ENCODE measurements at regions of chr4 and their contacts with region 1.

Region 1: GRCh38 chr4:74932816-74933561 is at the start of gene PARM1:
- ATAC-seq: peak; percentile 89 to 96 (median 92)
- H3K4me3 ChIP-seq: peak within 1 kb of the TSS; percentile 45 to 59 (median 52)
- H3K27ac ChIP-seq: no peak within 1 kb of the TSS
- H3K4me1 ChIP-seq: peaks cover 2 to 6% of the 10 kb centered on the region in 2 donors
- total RNA-seq, gene PARM1: 0.21 to 29.5 (median 2.2) TPM

Region 2: DNA sequence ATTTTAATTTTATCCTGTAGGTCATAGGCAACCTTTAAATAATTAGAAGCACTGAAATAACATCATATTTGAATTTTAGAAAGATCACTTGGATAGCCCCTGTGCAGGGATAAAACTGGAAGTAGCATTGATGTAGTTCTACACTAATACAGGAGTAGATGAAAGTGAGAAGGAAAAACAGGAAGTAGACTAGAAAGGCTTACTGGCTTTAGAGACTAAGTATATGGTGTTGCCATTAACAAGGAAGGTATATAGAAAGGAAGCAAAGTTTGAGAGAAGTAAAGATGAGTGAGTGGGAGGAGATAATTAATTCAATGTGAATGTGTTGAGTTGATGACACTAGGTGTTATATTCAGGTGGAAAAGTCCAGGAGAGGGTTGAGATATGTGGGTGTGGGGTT is 697.9 kb before region 1 on chr4:
- in situ Hi-C with region 1: no loop called
- ATAC-seq: no peak
- H3K4me3 ChIP-seq: no peak overlapping the region
- H3K27ac ChIP-seq: no peak overlapping the region
- H3K4me1 ChIP-seq: no peaks in the 10 kb centered on the region

Region 3: GRCh38 chr4:75107755-75108612 is 175.0 kb after region 1 on chr4:
- in situ Hi-C with region 1: no loop called
- ATAC-seq: peak in 6 of 8 experiments; percentile 24 to 93 (median 42)
- H3K4me3 ChIP-seq: no peak overlapping the region
- H3K27ac ChIP-seq: no peak overlapping the region
- H3K4me1 ChIP-seq: peaks cover 0 to 6% of the 10 kb centered on the region in 2 donors

Region 4: DNA sequence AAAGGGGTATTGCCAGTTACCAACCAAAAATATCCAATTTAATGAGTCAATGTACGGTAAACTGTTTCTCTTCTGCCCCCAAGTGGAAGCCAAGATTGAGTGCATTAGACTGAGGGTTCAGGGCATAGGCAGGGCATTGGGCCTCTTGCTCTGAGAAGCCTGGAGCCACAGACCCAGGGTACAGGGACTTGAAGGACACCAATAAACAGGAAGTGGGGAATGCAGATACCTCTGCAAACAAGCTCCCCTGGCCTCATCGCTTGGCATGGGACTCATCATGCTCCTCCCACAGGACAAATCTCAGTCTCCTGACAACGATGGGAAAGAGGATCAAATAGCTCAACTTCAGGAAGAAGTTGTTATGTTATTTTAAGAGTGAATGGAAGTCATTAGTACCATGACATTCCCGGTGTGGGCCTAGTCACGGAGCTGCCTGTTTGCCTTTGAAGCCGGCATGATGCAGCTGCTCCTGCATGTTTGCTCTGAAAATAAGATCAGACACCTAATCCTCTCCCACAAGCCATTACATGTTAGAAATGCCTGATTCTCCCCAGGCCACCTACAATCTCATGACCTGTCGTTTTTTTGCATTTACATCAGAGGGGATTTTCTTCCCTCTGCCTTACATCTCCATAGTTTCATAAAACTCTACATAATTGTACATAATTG is 357.1 kb after region 1 on chr4:
- in situ Hi-C with region 1: loop called in 1 of 9 experiments (anchors 25 kb)
- ATAC-seq: peak in 3 of 8 experiments; percentile 50 to 85 (median 65)
- H3K4me3 ChIP-seq: no peak overlapping the region
- H3K27ac ChIP-seq: no peak overlapping the region
- H3K4me1 ChIP-seq: peaks cover 0 to 3% of the 10 kb centered on the region in 2 donors

Region 5: DNA sequence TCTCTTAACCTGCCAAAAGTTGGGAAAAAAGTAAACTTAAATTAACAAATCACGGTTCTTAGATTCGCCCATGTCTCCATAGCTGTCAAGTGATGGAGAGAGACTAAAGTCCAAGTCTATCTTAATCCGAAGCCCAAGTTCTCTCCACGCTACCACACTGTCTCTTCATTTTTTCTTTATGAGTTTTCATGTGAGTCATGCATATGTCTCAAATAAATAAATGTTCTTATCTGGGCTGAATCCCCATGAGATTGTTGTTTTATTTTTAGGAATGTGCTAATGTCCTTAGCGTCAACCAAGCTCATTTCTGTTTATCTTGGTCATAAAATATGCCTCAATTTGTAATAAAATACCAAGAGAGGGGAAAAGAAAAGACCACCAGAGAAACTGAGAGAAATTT is 411.9 kb after region 1 on chr4:
- in situ Hi-C with region 1: no loop called
- ATAC-seq: no peak
- H3K4me3 ChIP-seq: no peak overlapping the region
- H3K27ac ChIP-seq: no peak overlapping the region
- H3K4me1 ChIP-seq: no peaks in the 10 kb centered on the region

Region 6: DNA sequence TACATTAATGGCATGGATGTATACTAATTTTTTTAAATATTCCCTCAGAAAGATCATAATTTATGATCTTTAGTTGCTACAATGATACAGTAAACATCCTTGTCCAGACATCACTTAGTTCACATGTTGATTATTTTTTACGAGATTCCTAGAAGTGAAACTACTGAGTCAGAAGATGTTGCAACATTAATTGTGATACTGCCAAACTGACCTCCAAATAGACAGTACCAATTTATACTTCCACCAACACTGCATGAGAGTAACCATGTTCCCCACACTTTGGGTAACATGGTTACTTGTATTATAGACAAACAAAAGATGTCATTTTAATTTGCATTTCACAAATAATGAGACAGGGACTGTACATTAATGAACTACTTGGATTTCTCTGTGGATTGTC is 561.6 kb after region 1 on chr4:
- in situ Hi-C with region 1: no loop called
- ATAC-seq: peak in 2 of 8 experiments; percentile 59 to 91
- H3K4me3 ChIP-seq: no peak overlapping the region
- H3K27ac ChIP-seq: no peak overlapping the region
- H3K4me1 ChIP-seq: no peaks in the 10 kb centered on the region